ENCODE measurements at regions of chr7 and their contacts with region 1.

Region 1: GRCh38 chr7:50632561-50633413 is 67.6 kb upstream of the DDC start:
- DNase-seq: peak; percentile 35 to 65 (median 62)
- H3K4me3 ChIP-seq: no peak overlapping the region
- H3K27ac ChIP-seq: no peak overlapping the region
- H3K4me1 ChIP-seq: peaks cover 0 to 4% (median 0%) of the 10 kb centered on the region in 4 experiments
- H3K27me3 ChIP-seq: no peaks in the 10 kb centered on the region

Region 2: GRCh38 chr7:50229964-50230363 is 402.8 kb before region 1 on chr7:
- CTCF ChIA-PET with region 1: no interaction called
- POLR2A ChIA-PET with region 1: no interaction called
- DNase-seq: peak; percentile 43 to 76 (median 72)
- H3K4me3 ChIP-seq: no peak overlapping the region
- H3K27ac ChIP-seq: no peak overlapping the region
- H3K4me1 ChIP-seq: peaks cover 15 to 34% (median 25%) of the 10 kb centered on the region in 4 experiments
- H3K27me3 ChIP-seq: no peaks in the 10 kb centered on the region

Region 3: DNA sequence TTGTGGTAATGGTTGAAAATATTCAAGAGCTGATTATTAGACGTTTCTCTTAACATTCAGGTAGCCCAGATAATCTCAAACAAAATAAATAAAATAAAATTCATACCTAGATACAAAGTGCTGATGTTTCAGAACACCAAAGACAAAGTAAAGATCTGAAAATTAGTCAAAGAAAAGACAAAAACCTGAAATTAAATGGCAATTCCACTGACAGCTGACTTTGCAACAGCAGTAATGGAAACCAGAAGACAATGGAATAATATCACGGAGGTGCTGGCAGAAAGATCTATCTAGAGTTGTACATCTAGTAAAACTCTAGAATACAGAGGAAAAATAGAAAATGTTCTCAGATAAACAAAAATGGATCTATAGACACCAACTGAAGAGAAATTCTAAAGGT is 386.2 kb before region 1 on chr7:
- CTCF ChIA-PET with region 1: no interaction called
- POLR2A ChIA-PET with region 1: no interaction called
- DNase-seq: peak; percentile 28 to 74 (median 55)
- H3K4me3 ChIP-seq: no peak overlapping the region
- H3K27ac ChIP-seq: no peak overlapping the region
- H3K4me1 ChIP-seq: no peaks in the 10 kb centered on the region
- H3K27me3 ChIP-seq: no peaks in the 10 kb centered on the region

Region 4: GRCh38 chr7:50560865-50561351 is 71.9 kb before region 1 on chr7:
- CTCF ChIA-PET with region 1: no interaction called
- POLR2A ChIA-PET with region 1: no interaction called
- DNase-seq: no peak
- H3K4me3 ChIP-seq: no peak overlapping the region
- H3K27ac ChIP-seq: no peak overlapping the region
- H3K4me1 ChIP-seq: peaks cover 0 to 21% (median 2%) of the 10 kb centered on the region in 4 experiments
- H3K27me3 ChIP-seq: peaks cover 0 to 6% (median 1%) of the 10 kb centered on the region in 5 experiments

Region 5: GRCh38 chr7:50610521-50611277 is 22.1 kb before region 1 on chr7:
- CTCF ChIA-PET with region 1: interaction called, 44 read pairs
- POLR2A ChIA-PET with region 1: no interaction called
- DNase-seq: peak; percentile 71 to 96 (median 93)
- H3K4me3 ChIP-seq: no peak overlapping the region
- H3K27ac ChIP-seq: peak overlapping the region in 1 of 2 experiments; percentile 29
- H3K4me1 ChIP-seq: peaks cover 5 to 30% (median 24%) of the 10 kb centered on the region in 4 experiments
- H3K27me3 ChIP-seq: no peaks in the 10 kb centered on the region

Region 6: GRCh38 chr7:50621973-50622490 is 10.8 kb before region 1 on chr7:
- CTCF ChIA-PET with region 1: interaction called, 44 read pairs
- POLR2A ChIA-PET with region 1: no interaction called
- DNase-seq: no peak
- H3K4me3 ChIP-seq: no peak overlapping the region
- H3K27ac ChIP-seq: no peak overlapping the region
- H3K4me1 ChIP-seq: no peaks in the 10 kb centered on the region
- H3K27me3 ChIP-seq: no peaks in the 10 kb centered on the region